ENCODE measurements at regions of chr11 and their contacts with region 1.

Region 1: GRCh38 chr11:34174412-34175041 is 69.1 kb downstream of the NAT10 start:
- DNase-seq: peak; percentile 76
- H3K4me3 Mint-ChIP-seq: peak overlapping the region; percentile 45
- H3K27ac Mint-ChIP-seq: no peak overlapping the region
- H3K4me1 Mint-ChIP-seq: no peaks in the 10 kb centered on the region
- H3K27me3 Mint-ChIP-seq: no peaks in the 10 kb centered on the region
- CTCF ChIP-seq: peak; percentile 96

Region 2: GRCh38 chr11:33970984-33971466 is 203.5 kb before region 1 on chr11:
- CTCF ChIA-PET with region 1: no interaction called
- POLR2A ChIA-PET with region 1: no interaction called
- intact Hi-C with region 1: no loop called
- DNase-seq: peak; percentile 66
- H3K4me3 Mint-ChIP-seq: no peak overlapping the region
- H3K27ac Mint-ChIP-seq: no peak overlapping the region
- H3K4me1 Mint-ChIP-seq: no peaks in the 10 kb centered on the region
- H3K27me3 Mint-ChIP-seq: no peaks in the 10 kb centered on the region
- CTCF ChIP-seq: peak; percentile 55

Region 3: DNA sequence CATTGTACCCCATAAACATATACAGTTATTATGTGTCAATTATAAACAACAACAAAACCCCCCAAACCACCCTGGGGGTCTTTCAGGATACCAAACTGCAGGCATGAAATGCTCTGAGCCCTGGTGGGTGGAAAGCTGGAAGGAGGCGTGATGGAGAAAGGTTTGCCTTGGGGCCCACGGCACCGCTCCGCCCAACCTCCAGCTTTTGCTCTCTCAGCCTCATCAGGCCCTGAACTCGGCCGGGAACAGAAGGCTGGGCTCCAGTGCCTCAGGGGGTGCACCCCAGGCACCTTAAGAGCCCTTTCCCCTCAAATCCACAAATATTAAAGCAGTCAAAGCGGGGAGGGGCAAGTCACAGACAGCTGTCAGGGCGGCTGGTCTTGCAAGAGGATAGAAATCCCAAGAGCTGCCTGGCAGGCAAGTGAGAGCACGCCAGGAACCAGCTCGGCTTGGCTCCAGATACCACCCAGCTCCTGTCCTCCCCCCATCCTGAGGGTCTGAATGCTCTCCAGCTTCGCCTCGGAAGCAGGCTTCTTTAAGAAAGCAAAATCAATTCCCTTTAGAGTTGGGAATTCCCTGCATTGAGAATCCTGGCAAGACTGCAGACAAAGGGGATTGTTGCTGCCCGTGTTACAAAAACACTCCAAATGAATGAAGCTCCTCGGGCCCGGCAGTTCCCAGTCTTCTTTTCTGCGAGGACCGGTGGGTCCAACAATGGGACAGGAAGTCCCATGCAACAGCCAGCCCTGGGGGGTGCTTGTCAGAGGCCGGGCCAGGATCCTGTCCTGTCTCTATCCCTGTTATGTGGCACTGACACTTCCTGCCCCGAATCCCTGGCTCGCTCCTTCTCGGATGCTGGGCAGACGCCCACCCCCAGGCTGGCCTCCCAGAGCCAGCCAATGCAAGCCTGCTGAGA is 11.7 kb after region 1 on chr11:
- CTCF ChIA-PET with region 1: interaction called, 15 read pairs
- POLR2A ChIA-PET with region 1: no interaction called
- intact Hi-C with region 1: no loop called
- DNase-seq: no peak
- H3K4me3 Mint-ChIP-seq: no peak overlapping the region
- H3K27ac Mint-ChIP-seq: no peak overlapping the region
- H3K4me1 Mint-ChIP-seq: no peaks in the 10 kb centered on the region
- H3K27me3 Mint-ChIP-seq: no peaks in the 10 kb centered on the region
- CTCF ChIP-seq: no peak

Region 4: DNA sequence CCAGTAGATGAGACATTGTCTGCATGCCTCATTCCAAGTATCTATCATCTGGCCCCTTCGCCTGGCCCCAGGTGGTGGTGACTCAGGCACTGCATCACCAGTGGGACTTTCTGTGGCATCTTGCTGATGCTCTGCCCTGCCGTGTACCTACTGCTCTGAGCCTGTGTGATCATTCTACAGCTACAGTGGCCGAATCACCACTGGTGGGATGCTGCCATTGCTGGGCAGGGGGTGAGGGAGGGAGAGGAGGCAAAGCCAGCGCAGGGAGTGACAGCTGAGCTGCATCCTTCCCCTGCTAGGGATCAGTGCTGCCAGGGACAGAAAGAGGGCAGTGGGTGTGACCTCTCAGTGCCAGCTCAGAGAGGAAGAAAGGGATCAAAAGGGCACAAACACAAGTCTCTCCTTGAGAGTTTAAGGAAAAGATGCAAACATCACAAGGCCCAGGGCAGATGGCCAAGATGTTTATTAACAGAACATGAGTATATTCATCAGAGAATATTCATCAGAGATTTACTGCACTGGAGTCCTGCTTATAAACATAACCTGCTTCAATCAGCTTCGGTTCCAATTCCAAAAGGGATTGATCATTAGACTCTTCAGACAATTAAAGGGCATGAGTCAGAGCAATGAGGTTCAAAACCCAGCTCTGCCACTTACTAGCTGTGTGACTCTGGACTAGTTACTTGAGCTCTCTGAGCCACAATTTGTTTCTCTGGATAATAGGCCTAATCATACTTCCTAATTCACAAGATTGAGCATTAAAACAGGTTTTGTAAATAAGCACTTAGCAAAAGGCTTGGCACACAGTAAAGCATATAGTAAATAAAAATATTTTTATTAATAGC is 40.7 kb after region 1 on chr11:
- CTCF ChIA-PET with region 1: interaction called, 6 read pairs
- POLR2A ChIA-PET with region 1: no interaction called
- intact Hi-C with region 1: loop called (anchors 2 kb)
- DNase-seq: peak; percentile 49
- H3K4me3 Mint-ChIP-seq: no peak overlapping the region
- H3K27ac Mint-ChIP-seq: peak overlapping the region; percentile 56
- H3K4me1 Mint-ChIP-seq: peaks cover 6% of the 10 kb centered on the region
- H3K27me3 Mint-ChIP-seq: no peaks in the 10 kb centered on the region
- CTCF ChIP-seq: no peak

Region 5: GRCh38 chr11:34250732-34251639 is 76.5 kb after region 1 on chr11:
- CTCF ChIA-PET with region 1: interaction called, 16 read pairs
- POLR2A ChIA-PET with region 1: no interaction called
- intact Hi-C with region 1: no loop called
- DNase-seq: peak; percentile 80
- H3K4me3 Mint-ChIP-seq: no peak overlapping the region
- H3K27ac Mint-ChIP-seq: peak overlapping the region; percentile 11
- H3K4me1 Mint-ChIP-seq: peaks cover 16% of the 10 kb centered on the region
- H3K27me3 Mint-ChIP-seq: no peaks in the 10 kb centered on the region
- CTCF ChIP-seq: no peak

Region 6: GRCh38 chr11:34344768-34345539 is 170.4 kb after region 1 on chr11:
- CTCF ChIA-PET with region 1: interaction called, 37 read pairs
- POLR2A ChIA-PET with region 1: interaction called, 3 read pairs
- intact Hi-C with region 1: no loop called
- DNase-seq: peak; percentile 91
- H3K4me3 Mint-ChIP-seq: no peak overlapping the region
- H3K27ac Mint-ChIP-seq: no peak overlapping the region
- H3K4me1 Mint-ChIP-seq: peaks cover 25% of the 10 kb centered on the region
- H3K27me3 Mint-ChIP-seq: no peaks in the 10 kb centered on the region
- CTCF ChIP-seq: no peak

Region 7: GRCh38 chr11:34492806-34493414 is 318.4 kb after region 1 on chr11:
- CTCF ChIA-PET with region 1: interaction called, 9 read pairs
- POLR2A ChIA-PET with region 1: no interaction called
- intact Hi-C with region 1: loop called (anchors 5 kb)
- DNase-seq: peak; percentile 76
- H3K4me3 Mint-ChIP-seq: no peak overlapping the region
- H3K27ac Mint-ChIP-seq: no peak overlapping the region
- H3K4me1 Mint-ChIP-seq: no peaks in the 10 kb centered on the region
- H3K27me3 Mint-ChIP-seq: no peaks in the 10 kb centered on the region
- CTCF ChIP-seq: peak; percentile 56

Measured in MCF 10A (cell line).